Heart right ventricle (tissue), 16 donors: ENCODE measurements at regions of chr1 and their contacts with region 1.

Region 1: GRCh38 chr1:56533621-56534020 is 45.7 kb downstream of the PLPP3 start:
- DNase-seq: no peak
- ATAC-seq: no peak
- H3K4me3 ChIP-seq: no peak overlapping the region
- H3K27ac ChIP-seq: peak overlapping the region in 5 of 10 donors; percentile 28 to 77 (median 31)
- H3K4me1 ChIP-seq: peaks cover 20 to 100% (median 98%) of the 10 kb centered on the region in 9 donors
- H3K27me3 ChIP-seq: no peaks in the 10 kb centered on the region
- CTCF ChIP-seq: no peak

Region 2: GRCh38 chr1:56570924-56571372 is 37.3 kb after region 1 on chr1:
- intact Hi-C with region 1: loop called in 3 of 10 experiments (anchors 5 kb)
- DNase-seq: no peak
- ATAC-seq: peak in 3 of 8 donors; percentile 61 to 66 (median 63)
- H3K4me3 ChIP-seq: no peak overlapping the region
- H3K27ac ChIP-seq: peak overlapping the region in 7 of 10 donors; percentile 12 to 98 (median 26)
- H3K4me1 ChIP-seq: peaks cover 6 to 99% (median 85%) of the 10 kb centered on the region in 9 donors
- H3K27me3 ChIP-seq: no peaks in the 10 kb centered on the region
- CTCF ChIP-seq: no peak